ENCODE measurements at regions of chr4 and their contacts with region 1.

Region 1: DNA sequence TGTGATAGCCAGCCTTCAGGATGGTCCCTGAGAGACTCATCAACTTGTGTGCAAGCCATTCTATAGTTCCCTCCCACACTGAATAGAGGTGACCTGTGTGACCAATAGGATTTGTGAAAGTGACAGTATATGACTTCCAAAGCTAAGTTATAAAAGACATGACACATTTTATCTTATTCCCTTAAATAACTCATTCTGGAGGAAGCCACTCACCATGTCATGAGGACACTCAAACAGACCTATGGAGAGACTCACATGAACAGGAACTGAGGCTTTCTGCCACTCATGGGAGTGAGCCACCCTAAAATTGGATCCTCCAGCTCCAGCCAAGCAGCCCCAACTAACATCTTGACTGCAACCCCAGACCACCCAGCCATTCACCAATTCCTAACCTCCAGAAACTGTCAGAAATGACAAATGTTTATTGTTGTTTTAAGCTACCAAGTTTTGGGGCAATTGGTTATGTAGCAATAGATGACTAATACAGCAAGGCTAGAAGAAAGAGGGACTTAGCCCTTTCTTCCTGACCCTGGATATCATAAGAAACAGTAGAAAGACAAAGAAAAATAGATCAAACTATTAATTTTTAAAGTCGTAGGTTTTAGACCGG is 9.0 kb upstream of the CHIC2 start:
- DNase-seq: no peak
- H3K4me3 ChIP-seq: no peak overlapping the region
- H3K27ac ChIP-seq: no peak overlapping the region
- H3K4me1 ChIP-seq: no peaks in the 10 kb centered on the region
- H3K27me3 ChIP-seq: no peaks in the 10 kb centered on the region

Region 2: DNA sequence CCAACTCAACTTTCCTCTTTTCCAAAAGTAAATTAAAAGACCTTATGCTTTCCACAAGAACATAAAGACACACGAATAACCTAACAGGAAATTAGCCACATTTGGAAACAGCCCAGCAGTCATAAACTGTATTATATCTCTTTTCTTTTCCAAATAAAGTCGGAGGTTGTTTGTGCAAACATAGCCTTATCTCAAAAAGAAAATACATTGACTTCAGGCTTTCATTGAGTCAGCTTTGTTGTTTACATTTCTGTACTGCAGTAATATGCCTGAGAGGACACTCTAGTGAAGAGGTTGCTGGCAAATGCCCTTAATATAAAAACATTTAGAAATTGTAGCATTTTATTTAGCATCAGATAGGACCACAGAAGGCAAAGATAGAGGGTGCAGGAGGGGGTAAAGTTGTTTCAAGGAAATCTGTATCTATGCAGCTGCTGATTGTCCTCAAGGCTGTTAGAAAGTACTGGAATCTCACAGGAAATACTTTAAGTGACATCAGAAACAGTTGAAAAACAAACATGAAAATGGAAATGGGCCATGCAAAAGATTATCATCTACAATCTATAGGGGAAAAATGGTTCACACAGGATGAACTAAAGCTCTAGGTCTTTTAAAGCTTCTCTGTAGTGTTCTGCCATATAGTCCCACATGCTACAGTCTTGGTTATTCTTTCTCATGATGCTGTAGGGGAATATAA is 496.6 kb before region 1 on chr4:
- CTCF ChIA-PET with region 1: no interaction called
- POLR2A ChIA-PET with region 1: no interaction called
- DNase-seq: no peak
- H3K4me3 ChIP-seq: no peak overlapping the region
- H3K27ac ChIP-seq: no peak overlapping the region
- H3K4me1 ChIP-seq: peaks cover 0 to 6% (median under 1%) of the 10 kb centered on the region in 4 experiments
- H3K27me3 ChIP-seq: no peaks in the 10 kb centered on the region

Region 3: DNA sequence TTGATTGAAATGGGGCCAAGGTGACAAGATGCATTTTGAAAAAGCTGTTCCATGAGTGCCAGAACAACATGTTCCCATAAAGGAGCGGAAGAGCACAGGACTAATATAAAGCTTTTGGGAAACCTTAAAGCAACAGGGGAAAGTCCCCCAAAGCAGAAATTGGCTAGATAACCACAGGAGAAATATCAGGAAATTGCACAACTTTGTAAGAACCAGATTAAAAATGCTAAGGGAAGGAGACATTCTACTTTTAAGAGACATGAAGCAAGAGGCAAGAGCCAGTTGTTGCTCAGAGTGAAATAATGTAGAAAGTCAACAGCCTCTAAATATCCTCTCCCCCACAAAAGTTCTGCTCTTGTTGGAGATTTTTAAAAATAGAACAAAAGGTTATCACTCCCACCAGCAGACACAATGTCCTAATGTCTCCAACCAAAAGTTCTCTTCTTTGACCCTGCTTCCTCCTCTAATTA is 396.9 kb before region 1 on chr4:
- CTCF ChIA-PET with region 1: no interaction called
- POLR2A ChIA-PET with region 1: no interaction called
- DNase-seq: peak; percentile 45 to 82 (median 81)
- H3K4me3 ChIP-seq: peak overlapping the region in 2 of 7 experiments; percentile 13 to 19
- H3K27ac ChIP-seq: no peak overlapping the region
- H3K4me1 ChIP-seq: peaks cover 4 to 23% (median 13%) of the 10 kb centered on the region in 4 experiments
- H3K27me3 ChIP-seq: no peaks in the 10 kb centered on the region

Region 4: GRCh38 chr4:53962516-53963225 is 110.7 kb before region 1 on chr4:
- CTCF ChIA-PET with region 1: no interaction called
- POLR2A ChIA-PET with region 1: no interaction called
- DNase-seq: no peak
- H3K4me3 ChIP-seq: no peak overlapping the region
- H3K27ac ChIP-seq: no peak overlapping the region
- H3K4me1 ChIP-seq: no peaks in the 10 kb centered on the region
- H3K27me3 ChIP-seq: no peaks in the 10 kb centered on the region

Region 5: GRCh38 chr4:54085284-54085683 is 11.9 kb after region 1 on chr4:
- CTCF ChIA-PET with region 1: interaction called, 17 read pairs
- POLR2A ChIA-PET with region 1: no interaction called
- DNase-seq: no peak
- H3K4me3 ChIP-seq: no peak overlapping the region
- H3K27ac ChIP-seq: no peak overlapping the region
- H3K4me1 ChIP-seq: no peaks in the 10 kb centered on the region
- H3K27me3 ChIP-seq: peaks cover 0 to 9% (median 5%) of the 10 kb centered on the region in 5 experiments

Region 6: DNA sequence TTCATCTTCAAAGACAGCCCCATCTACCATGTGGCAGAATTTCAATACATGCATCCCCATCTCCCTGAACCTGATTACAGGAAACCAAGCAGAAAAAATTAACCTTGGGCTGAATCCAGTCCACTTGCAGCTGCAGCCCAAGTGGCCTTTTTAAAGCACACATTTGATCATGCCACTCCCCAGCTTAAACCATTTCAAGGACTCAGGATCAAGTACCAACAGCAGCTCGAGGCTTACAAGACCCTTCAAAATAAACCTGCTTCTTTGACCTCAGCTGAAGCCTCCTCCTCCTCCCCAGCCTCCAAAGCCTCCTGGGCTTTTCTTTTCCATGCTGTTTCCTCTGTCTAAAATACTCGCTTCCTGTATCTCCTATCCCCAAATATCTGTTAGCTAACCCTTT is 533.7 kb after region 1 on chr4:
- CTCF ChIA-PET with region 1: no interaction called
- POLR2A ChIA-PET with region 1: no interaction called
- DNase-seq: no peak
- H3K4me3 ChIP-seq: no peak overlapping the region
- H3K27ac ChIP-seq: no peak overlapping the region
- H3K4me1 ChIP-seq: no peaks in the 10 kb centered on the region
- H3K27me3 ChIP-seq: no peaks in the 10 kb centered on the region